Activated T-helper 1 cell treated with anti-CD3 and anti-CD28 coated beads, Interleukin-12 subunit alpha, Interleukin-12 subunit beta, Interleukin-2, Interleukin-4 antibody, amounts not matched to agents 30 ng/mL and 10 ng/mL and 1 ng/mL, durations not matched to agents 14 hours and 24 hours and 36 hours (primary cell): ENCODE measurements at regions of chr9 and their contacts with region 1.

Region 1: DNA sequence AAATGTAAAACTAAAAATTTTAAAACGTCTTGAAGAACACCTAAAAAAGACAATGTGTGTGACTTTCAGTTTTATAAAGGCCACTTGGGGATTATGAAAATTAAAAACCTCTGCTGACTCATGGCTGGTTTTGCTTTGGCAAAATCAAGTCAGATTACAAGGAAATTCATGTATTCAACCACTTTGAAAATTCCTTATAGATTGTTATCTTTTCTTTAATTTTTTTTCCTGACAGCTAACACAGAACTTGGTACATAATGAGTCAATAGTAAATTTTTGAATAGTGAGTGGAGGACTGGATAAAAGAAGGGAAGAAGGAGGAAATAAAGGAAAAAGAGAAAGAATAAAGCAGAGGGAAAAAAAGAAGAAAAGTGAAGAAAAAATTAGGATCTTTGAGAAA is 1774.7 kb upstream of the ACO1 start:
- DNase-seq: no peak
- H3K4me3 Mint-ChIP-seq: no peak overlapping the region
- H3K27ac Mint-ChIP-seq: no peak overlapping the region
- H3K4me1 Mint-ChIP-seq: no peaks in the 10 kb centered on the region
- H3K27me3 Mint-ChIP-seq: no peaks in the 10 kb centered on the region

Region 2: DNA sequence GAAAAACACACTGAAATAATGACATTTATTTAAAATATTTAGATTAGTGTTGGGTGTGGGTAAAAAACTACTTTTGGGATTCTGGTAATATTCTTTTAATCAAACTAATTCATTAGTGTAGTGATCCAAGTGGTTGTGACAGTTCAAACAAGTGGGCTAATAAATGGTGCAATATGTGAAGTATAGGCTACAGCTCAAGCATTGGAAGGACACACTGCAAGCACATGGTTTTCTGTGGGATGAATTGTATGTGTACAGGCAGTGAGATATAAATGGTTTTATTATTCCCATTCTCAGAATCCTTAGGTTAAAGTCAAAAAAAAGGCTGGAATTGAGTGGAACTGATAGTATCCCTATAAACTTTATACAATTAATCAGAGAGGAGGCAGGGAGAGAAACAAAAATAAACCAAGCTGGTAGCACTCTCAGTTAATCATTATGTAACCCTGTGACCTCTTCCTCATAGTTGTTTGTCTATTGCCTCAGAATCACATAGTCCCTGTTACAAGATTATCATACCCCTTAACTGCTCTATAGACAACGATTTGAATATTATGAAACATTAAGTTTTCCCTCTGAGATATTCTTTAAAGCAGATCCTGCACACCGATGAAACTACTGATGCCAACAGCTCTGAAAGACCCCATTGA is 19.3 kb after region 1 on chr9:
- intact Hi-C with region 1: loop called (anchors 2 kb)
- DNase-seq: no peak
- H3K4me3 Mint-ChIP-seq: no peak overlapping the region
- H3K27ac Mint-ChIP-seq: no peak overlapping the region
- H3K4me1 Mint-ChIP-seq: no peaks in the 10 kb centered on the region
- H3K27me3 Mint-ChIP-seq: no peaks in the 10 kb centered on the region

Region 3: DNA sequence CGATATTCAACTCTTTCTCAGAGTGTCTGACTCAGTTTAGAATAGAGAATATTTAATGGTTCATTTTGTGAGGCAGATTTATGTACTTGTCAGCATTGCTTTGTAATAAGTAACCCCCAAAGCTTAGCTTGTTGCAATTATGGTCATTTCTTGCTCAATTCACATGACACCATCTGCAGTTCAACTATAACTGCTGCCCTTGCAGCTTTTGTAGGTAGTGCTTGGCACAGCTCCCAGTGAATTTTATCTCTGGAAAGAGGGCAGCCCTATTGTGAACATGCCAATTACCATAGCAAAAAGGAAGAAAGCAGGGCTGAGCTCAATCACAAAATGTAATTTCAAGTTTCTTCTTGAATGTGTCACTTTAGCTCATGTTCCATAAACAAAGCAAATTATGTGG is 187.1 kb after region 1 on chr9:
- intact Hi-C with region 1: no loop called
- DNase-seq: no peak
- H3K4me3 Mint-ChIP-seq: no peak overlapping the region
- H3K27ac Mint-ChIP-seq: no peak overlapping the region
- H3K4me1 Mint-ChIP-seq: no peaks in the 10 kb centered on the region
- H3K27me3 Mint-ChIP-seq: no peaks in the 10 kb centered on the region